ENCODE measurements at regions of chr10 and their contacts with region 1.

Region 1: DNA sequence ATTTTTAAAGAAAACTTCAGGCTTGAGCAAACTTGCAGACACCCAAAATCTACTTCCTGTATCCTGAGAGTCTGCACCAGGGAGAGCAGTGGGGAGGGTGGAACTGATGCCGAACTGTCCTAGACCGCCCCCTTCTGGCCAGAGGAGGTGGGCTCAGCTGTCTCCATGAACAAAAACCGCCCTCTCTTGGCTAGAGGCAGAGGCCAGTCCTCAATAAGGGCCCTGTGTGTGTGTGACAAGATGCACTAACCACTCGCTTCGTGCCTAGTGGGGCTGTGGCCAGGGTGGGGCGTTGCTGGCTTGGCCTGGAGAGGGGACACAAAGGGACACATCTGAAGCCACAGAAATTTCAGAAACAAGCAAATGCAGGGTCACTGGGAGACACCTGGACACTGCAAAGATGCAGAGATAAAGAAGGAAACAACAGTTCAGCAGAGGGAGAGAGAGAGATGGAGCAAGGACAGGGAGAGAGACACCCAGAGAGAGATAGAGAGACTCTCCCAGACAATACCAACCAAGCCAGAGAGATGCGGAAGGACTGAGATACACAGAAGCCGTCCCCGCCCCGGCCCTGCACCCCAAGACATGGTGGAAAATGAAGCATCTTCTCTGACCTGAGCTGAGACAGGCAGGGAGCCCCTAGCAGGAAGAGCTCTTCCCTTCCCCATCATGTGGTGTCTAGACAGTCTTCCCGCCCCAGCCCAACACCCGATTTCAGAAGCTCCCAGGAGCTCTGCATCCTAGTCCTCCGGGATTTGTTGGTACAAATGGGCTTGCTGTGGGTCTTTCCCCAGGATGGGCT is 22.7 kb upstream of the FXYD4 start:
- DNase-seq: peak; percentile 92
- CTCF ChIP-seq: peak; percentile 89

Region 2: GRCh38 chr10:43121444-43121843 is 227.3 kb before region 1 on chr10:
- CTCF ChIA-PET with region 1: interaction called, 10 read pairs
- POLR2A ChIA-PET with region 1: no interaction called
- DNase-seq: no peak
- CTCF ChIP-seq: no peak

Region 3: DNA sequence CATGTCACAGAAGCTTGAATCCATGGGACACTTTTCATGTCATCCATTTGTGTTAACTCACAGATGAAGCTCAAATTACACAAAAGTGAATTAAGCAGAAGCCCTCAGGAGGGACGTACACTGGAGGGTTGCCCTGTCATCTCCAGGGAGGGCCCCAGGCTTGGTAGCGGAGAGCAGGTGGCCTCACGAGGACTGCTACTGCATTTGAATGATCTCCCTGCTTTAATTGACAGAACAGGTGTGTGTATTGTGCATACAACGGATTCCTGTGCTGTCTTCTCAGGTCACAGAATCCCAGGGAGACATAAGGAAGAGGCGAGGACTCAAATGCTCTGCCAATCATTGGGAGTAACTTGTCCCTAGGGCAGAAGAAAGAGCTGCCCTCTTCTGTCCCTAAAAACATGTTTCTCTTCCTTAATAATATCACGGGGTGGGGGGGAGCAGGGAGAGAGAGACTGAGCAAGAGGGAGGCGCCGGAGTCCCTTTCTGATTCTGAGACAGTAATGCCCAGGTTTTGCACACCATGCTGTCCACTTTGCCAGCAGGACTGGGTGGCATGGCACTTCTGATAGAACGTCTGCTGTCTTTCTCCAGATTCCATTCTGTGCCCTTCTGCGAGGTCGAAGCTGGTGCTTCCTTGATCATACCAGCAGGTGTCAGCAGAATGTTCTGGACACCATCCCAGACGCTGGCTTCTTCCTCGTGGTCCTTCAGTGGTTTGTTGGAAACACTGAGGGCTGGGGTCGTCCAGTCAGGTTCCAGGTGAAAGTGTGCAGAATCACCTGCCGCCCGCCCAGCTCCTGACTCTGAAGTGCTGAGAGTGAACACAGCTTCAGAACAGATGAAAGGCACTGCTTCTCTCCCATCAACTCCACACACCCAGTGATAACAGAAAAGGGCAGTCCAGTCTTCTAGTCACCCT is 55.7 kb before region 1 on chr10:
- CTCF ChIA-PET with region 1: interaction called, 37 read pairs
- POLR2A ChIA-PET with region 1: no interaction called
- DNase-seq: peak; percentile 65
- CTCF ChIP-seq: peak; percentile 67

Region 4: GRCh38 chr10:43338113-43338512 is 10.6 kb before region 1 on chr10:
- CTCF ChIA-PET with region 1: interaction called, 11 read pairs
- POLR2A ChIA-PET with region 1: no interaction called
- DNase-seq: no peak
- CTCF ChIP-seq: no peak

Region 5: DNA sequence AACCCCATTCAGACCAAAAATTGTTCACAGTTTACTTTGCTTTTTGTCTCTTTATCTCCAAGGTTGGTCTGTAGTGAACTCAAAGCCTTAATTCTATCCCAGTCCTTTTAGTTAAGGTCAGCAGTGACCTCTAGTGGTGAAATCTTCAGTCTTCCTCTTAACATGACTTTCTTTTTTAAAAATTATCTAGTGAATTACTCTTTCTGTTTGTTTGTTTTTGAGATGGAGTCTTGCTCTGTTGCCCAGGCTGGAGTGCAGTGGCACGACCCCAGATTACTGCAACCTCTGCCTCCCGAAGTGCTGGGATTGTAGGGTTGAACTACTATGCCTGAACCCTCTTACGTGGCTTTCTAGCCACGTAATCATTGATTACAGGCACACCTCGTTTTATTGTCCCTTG is 113.2 kb after region 1 on chr10:
- CTCF ChIA-PET with region 1: interaction called, 12 read pairs
- POLR2A ChIA-PET with region 1: no interaction called
- DNase-seq: peak; percentile 65
- CTCF ChIP-seq: peak; percentile 55

Region 6: GRCh38 chr10:43734716-43735115 is 386.0 kb after region 1 on chr10:
- CTCF ChIA-PET with region 1: no interaction called
- POLR2A ChIA-PET with region 1: no interaction called
- DNase-seq: no peak
- CTCF ChIP-seq: no peak